ENCODE measurements at regions of chr1 and their contacts with region 1.

Region 1: GRCh38 chr1:41109316-41110197 is 88.0 kb upstream of the SLFNL1 start:
- DNase-seq: peak; percentile 85
- H3K4me3 ChIP-seq: peak overlapping the region in 1 of 4 donors; percentile 3
- H3K27ac ChIP-seq: peak overlapping the region; percentile 69 to 92 (median 90)
- H3K4me1 ChIP-seq: peaks cover 0 to 31% (median 31%) of the 10 kb centered on the region in 4 donors
- H3K27me3 ChIP-seq: no peaks in the 10 kb centered on the region
- CTCF ChIP-seq: no peak
- EP300 ChIP-seq: peak; percentile 75 to 96 (median 88)
- POLR2A ChIP-seq: no peak

Region 2: GRCh38 chr1:40862008-40862863 is 247.3 kb before region 1 on chr1 and contains the start of gene CITED4:
- intact Hi-C with region 1: loop called (anchors 10 kb)
- DNase-seq: peak; percentile 98
- H3K4me3 ChIP-seq: peak within 1 kb of the TSS; percentile 48 to 90 (median 82)
- H3K27ac ChIP-seq: peak within 1 kb of the TSS; percentile 85 to 98 (median 90)
- H3K4me1 ChIP-seq: peaks cover 0 to 56% (median 48%) of the 10 kb centered on the region in 4 donors
- H3K27me3 ChIP-seq: no peaks in the 10 kb centered on the region
- CTCF ChIP-seq: peak in 1 of 4 experiments; percentile 15
- EP300 ChIP-seq: no peak
- POLR2A ChIP-seq: peak; percentile 90 to 95
- total RNA-seq, gene CITED4: 22.7 to 59.8 (median 36.9) TPM

Region 3: GRCh38 chr1:40979233-40980067 is 130.1 kb before region 1 on chr1 and contains the start of gene CTPS1:
- intact Hi-C with region 1: loop called (anchors 10 kb)
- DNase-seq: peak; percentile 98
- H3K4me3 ChIP-seq: peak within 1 kb of the TSS; percentile 53 to 76 (median 74)
- H3K27ac ChIP-seq: peak within 1 kb of the TSS; percentile 93 to 98 (median 96)
- H3K4me1 ChIP-seq: peaks cover 0 to 56% (median 45%) of the 10 kb centered on the region in 4 donors
- H3K27me3 ChIP-seq: no peaks in the 10 kb centered on the region
- CTCF ChIP-seq: peak in 2 of 4 experiments; percentile 22 to 23
- EP300 ChIP-seq: no peak
- POLR2A ChIP-seq: peak; percentile 23 to 52
- total RNA-seq, gene CTPS1: 26.0 to 99.0 (median 58.0) TPM

Region 4: GRCh38 chr1:41152622-41153044 is 43.1 kb after region 1 on chr1:
- intact Hi-C with region 1: loop called (anchors 5 kb)
- DNase-seq: peak; percentile 65
- H3K4me3 ChIP-seq: no peak overlapping the region
- H3K27ac ChIP-seq: peak overlapping the region; percentile 71 to 86 (median 74)
- H3K4me1 ChIP-seq: peaks cover 0 to 46% (median 38%) of the 10 kb centered on the region in 4 donors
- H3K27me3 ChIP-seq: no peaks in the 10 kb centered on the region
- CTCF ChIP-seq: no peak
- EP300 ChIP-seq: peak in 3 of 4 donors; percentile 11 to 66 (median 28)
- POLR2A ChIP-seq: no peak